ENCODE measurements at regions of chr2 and their contacts with region 1.

Region 1: GRCh38 chr2:229780856-229781773 is 66.8 kb upstream of the DNER start:
- DNase-seq: peak; percentile 49
- H3K4me3 ChIP-seq: peak overlapping the region in 1 of 2 experiments; percentile 4; a peak in 1 of 4 replicates
- H3K27ac ChIP-seq: peak overlapping the region; percentile 0 to 11; a peak in 1 of 4 replicates
- H3K4me1 ChIP-seq: peaks cover 2 to 7% of the 10 kb centered on the region in 2 experiments; a peak in 3 of 4 replicates
- H3K27me3 ChIP-seq: no peaks in the 10 kb centered on the region
- CTCF ChIP-seq: peak; percentile 94
- EP300 ChIP-seq: no peak
- RAD21 ChIP-seq: peak; percentile 66

Region 2: DNA sequence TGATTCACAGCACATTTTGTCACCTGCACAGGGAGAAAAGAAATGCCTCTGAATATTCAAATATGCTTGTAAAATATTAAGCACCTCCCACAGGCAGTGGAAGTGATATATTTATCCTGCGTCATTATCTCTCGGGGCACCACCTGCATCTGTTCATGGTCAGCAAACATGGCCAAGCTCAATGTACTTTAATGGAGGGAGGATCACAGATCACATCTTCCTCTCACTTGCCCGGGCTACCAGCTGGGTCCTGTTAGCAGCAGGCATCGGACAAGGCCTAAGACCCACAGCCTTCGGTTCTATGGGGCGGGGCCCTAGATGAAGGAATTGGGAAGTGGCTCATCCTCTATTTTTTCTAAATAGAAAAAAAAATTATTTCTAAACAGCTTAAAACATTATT is 27.8 kb before region 1 on chr2:
- CTCF ChIA-PET with region 1: interaction called, 16 read pairs
- POLR2A ChIA-PET with region 1: no interaction called
- DNase-seq: peak; percentile 16
- H3K4me3 ChIP-seq: no peak overlapping the region
- H3K27ac ChIP-seq: no peak overlapping the region
- H3K4me1 ChIP-seq: no peaks in the 10 kb centered on the region; a peak in 1 of 4 replicates
- H3K27me3 ChIP-seq: no peaks in the 10 kb centered on the region
- CTCF ChIP-seq: no peak
- EP300 ChIP-seq: no peak
- RAD21 ChIP-seq: no peak

Region 3: DNA sequence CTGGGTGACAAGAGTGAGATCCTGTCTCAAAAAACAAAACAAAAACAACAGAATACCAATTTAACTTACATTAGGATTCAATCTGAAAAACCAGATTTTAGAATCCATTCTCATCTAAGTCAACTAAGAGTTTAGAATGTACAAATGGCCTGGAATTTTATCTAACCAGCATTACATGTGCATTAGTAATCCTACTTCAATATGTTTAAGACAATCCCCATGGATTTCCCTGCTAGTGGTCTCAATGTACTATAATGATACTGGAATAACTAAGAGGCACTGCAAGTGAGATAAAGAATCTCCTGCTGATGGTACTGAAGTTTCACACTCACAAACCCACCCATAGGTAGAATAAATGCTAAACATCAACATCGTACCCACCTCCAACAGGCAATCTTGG is 12.9 kb before region 1 on chr2:
- CTCF ChIA-PET with region 1: interaction called, 39 read pairs
- POLR2A ChIA-PET with region 1: no interaction called
- DNase-seq: no peak
- H3K4me3 ChIP-seq: no peak overlapping the region
- H3K27ac ChIP-seq: no peak overlapping the region
- H3K4me1 ChIP-seq: no peaks in the 10 kb centered on the region
- H3K27me3 ChIP-seq: no peaks in the 10 kb centered on the region
- CTCF ChIP-seq: no peak
- EP300 ChIP-seq: no peak
- RAD21 ChIP-seq: no peak

Region 4: GRCh38 chr2:229800997-229801754 is 20.1 kb after region 1 on chr2:
- CTCF ChIA-PET with region 1: interaction called, 18 read pairs
- POLR2A ChIA-PET with region 1: no interaction called
- DNase-seq: peak; percentile 61
- H3K4me3 ChIP-seq: no peak overlapping the region; a peak in 1 of 4 replicates
- H3K27ac ChIP-seq: peak overlapping the region in 1 of 2 experiments; percentile 40; a peak in 3 of 4 replicates
- H3K4me1 ChIP-seq: peaks cover 0 to 4% of the 10 kb centered on the region in 2 experiments; a peak in 1 of 4 replicates
- H3K27me3 ChIP-seq: no peaks in the 10 kb centered on the region
- CTCF ChIP-seq: peak; percentile 87
- EP300 ChIP-seq: no peak
- RAD21 ChIP-seq: peak; percentile 70

Region 5: DNA sequence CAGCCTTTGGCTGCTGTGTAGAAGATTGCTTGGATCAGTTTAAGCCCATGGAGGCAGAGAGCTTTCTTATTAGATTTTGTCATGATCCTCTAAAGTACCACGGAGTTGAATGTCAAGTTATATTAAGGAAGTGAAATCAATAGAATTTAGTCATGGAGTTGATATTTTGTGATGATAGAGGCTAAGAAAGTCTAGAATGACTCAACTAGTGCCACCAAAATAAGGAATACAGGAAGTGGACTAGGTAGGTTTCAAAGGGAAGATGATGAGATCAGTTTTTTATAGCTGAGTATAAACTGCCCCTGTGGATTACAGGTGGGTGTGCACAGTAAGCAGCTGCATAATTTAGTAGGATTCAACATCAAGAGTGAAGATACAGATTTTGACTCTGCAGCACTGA is 166.4 kb after region 1 on chr2:
- CTCF ChIA-PET with region 1: no interaction called
- POLR2A ChIA-PET with region 1: no interaction called
- DNase-seq: no peak
- H3K4me3 ChIP-seq: no peak overlapping the region
- H3K27ac ChIP-seq: no peak overlapping the region
- H3K4me1 ChIP-seq: no peaks in the 10 kb centered on the region
- H3K27me3 ChIP-seq: no peaks in the 10 kb centered on the region
- CTCF ChIP-seq: no peak
- EP300 ChIP-seq: no peak
- RAD21 ChIP-seq: no peak

Region 6: DNA sequence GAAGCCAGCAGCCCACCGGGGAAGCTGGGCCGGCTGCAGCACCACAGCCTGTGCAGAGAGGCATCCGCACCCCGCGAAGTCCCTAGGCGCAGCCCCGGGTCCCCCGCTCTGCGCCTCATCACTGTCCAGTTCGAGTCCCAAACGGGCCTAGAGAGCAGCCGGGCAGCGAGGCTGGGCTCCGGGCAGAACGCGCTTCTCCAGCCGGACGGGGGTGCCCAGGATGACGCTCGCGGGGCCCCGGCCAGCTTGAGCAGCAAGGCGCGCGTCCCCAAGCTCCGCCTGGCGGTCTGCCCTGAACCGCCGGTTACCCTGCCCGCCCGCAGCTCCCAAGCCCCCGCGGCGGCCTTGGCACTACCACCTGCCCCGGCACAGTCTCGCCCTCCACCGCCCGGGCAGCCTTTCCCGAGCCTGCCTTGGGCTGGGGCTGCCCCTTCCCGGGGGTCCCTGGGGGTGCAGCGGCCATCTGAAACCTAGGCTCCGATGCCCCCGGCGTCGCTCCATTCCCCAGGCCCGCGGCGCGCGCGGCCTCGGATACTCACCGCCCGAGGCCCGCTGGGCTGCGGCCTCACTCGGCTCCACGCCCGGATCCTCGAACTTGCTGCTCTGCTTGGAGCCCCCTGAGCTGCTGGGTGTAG is 287.0 kb after region 1 on chr2:
- CTCF ChIA-PET with region 1: interaction called, 17 read pairs
- POLR2A ChIA-PET with region 1: no interaction called
- DNase-seq: peak; percentile 82
- H3K4me3 ChIP-seq: peak overlapping the region; percentile 56 to 66
- H3K27ac ChIP-seq: no peak overlapping the region; a peak in 1 of 4 replicates
- H3K4me1 ChIP-seq: no peaks in the 10 kb centered on the region; a peak in 1 of 4 replicates
- H3K27me3 ChIP-seq: no peaks in the 10 kb centered on the region
- CTCF ChIP-seq: peak; percentile 21
- EP300 ChIP-seq: no peak
- RAD21 ChIP-seq: no peak

Region 7: GRCh38 chr2:230090967-230091366 is 309.9 kb after region 1 on chr2:
- CTCF ChIA-PET with region 1: no interaction called
- POLR2A ChIA-PET with region 1: no interaction called
- DNase-seq: no peak
- H3K4me3 ChIP-seq: no peak overlapping the region
- H3K27ac ChIP-seq: no peak overlapping the region
- H3K4me1 ChIP-seq: no peaks in the 10 kb centered on the region
- H3K27me3 ChIP-seq: no peaks in the 10 kb centered on the region; the same call in 1 of the 2 replicates
- CTCF ChIP-seq: no peak
- EP300 ChIP-seq: no peak
- RAD21 ChIP-seq: no peak